GM10248 (cell line): ENCODE measurements at regions of chr9 and their contacts with region 1.

Region 1: GRCh38 chr9:68685770-68686169 is 19.3 kb upstream of the PIP5K1B start:
- DNase-seq: peak; percentile 65
- CTCF ChIP-seq: peak; percentile 60

Region 2: DNA sequence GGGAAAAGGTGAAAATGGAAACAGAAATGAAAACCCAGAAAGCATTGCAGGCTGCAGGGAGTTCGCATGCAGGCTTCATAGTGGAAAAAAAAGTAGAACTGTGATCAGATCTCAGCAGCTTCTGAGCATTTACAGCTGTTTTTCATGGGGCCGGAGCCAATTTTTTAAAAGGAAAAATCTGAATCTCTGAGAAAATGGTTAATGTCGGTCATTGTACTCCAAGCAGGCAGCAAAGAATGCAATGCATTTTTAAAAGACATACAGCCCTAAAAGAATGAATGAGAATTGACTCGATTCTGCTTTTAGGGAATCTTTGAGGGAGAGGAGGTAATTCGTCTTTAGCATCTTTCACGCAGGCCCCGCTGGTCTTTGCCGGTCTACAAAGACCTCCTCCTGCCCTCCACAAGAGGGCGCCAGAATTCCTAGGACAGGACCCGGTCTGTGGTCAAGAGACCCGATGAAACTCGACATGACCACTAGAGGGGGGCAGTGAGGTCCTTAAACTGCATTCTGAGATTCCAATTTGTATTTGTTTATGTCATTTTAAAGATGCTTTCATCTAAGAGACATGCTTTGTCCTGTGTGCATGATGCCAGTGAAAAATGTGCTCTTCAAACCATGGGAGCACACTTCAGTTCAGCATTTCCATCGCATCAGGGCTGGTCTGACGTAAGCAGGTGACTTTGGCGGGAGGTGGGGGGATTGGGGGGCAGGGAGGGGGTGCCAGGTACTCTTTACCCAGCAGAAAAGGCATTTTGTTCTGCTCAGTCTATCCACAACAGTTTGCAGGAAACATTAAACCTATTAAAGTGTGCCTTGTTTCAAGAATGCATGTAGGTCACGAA is 101.4 kb before region 1 on chr9:
- CTCF ChIA-PET with region 1: interaction called, 39 read pairs
- POLR2A ChIA-PET with region 1: no interaction called
- DNase-seq: peak; percentile 86
- CTCF ChIP-seq: peak; percentile 99

Region 3: GRCh38 chr9:68640421-68641089 is 45.2 kb before region 1 on chr9:
- CTCF ChIA-PET with region 1: interaction called, 10 read pairs
- POLR2A ChIA-PET with region 1: no interaction called
- DNase-seq: no peak
- CTCF ChIP-seq: no peak

Region 4: DNA sequence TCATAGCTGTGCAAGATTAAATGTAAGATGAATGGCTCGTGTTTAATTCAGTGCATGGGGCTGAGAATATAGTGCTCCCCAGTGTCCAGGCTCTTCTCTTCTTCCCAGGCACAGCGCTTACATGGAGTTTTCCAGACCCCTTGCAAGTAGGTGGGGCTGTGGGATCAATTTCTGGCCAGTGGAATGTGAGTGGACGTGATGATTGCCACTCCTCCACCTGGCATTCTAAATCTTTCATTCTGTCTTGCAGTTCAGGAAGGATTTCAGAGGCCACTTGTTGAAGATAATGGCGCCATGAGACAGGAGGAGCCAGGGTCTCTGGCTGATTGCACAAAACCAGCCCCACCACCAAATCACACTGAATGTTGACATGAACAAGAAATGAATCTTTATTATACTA is 12.1 kb after region 1 on chr9:
- CTCF ChIA-PET with region 1: interaction called, 17 read pairs
- POLR2A ChIA-PET with region 1: no interaction called
- DNase-seq: no peak
- CTCF ChIP-seq: no peak

Region 5: GRCh38 chr9:68704814-68705530 is 19.2 kb after region 1 on chr9 and contains the start of gene PIP5K1B:
- CTCF ChIA-PET with region 1: interaction called, 17 read pairs
- POLR2A ChIA-PET with region 1: no interaction called
- DNase-seq: peak; percentile 91
- CTCF ChIP-seq: no peak